ENCODE measurements at regions of chr1 and their contacts with region 1.

Region 1: DNA sequence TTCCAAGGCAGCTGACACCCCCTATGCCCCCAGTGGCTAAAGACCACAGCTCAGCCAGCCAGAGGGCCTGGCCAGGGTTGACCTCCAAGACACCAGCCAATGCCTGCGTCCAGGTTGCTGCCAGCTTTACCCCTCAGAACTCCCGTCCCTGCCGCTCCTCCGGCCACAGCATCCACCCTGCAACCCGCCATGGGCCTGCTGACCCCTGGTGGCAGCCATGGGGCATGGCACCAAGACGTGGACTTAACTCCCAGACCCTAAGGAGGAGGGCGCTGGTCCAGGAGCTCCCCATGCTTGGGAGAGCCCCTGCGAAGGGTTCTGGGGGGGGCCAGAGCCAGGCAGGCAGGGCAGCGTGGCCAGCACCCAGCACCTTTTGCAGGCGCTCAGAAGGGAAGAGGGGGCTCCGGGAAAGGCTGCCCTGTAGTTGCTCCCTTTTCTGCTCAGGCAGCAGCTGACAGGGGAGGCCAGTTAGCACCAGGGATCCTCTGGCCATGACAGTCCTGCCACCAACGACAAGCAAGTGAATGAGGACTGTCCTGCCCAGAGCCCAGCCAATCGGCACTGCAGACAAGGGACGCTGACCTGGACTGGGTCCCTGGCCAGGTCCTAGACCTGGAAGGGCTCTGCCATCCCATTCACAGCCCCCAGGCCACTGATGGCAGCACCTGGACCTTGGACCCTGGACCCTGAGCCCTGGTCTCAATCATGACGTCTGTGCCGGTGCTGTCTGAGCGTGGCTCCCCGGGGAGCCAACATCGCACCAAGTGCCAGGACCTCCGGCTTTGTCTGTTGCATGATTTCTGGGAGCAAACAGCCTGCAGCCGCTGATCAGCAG is 246.2 kb downstream of the NPHP4 start:
- DNase-seq: peak; percentile 62 to 70
- ATAC-seq: peak; percentile 53 to 78 (median 64)
- H3K4me3 ChIP-seq: no peak overlapping the region
- H3K27ac ChIP-seq: no peak overlapping the region
- H3K4me1 ChIP-seq: no peaks in the 10 kb centered on the region
- H3K27me3 ChIP-seq: peaks cover 0 to 36% (median 9%) of the 10 kb centered on the region in 3 donors
- CTCF ChIP-seq: peak; percentile 76

Region 2: DNA sequence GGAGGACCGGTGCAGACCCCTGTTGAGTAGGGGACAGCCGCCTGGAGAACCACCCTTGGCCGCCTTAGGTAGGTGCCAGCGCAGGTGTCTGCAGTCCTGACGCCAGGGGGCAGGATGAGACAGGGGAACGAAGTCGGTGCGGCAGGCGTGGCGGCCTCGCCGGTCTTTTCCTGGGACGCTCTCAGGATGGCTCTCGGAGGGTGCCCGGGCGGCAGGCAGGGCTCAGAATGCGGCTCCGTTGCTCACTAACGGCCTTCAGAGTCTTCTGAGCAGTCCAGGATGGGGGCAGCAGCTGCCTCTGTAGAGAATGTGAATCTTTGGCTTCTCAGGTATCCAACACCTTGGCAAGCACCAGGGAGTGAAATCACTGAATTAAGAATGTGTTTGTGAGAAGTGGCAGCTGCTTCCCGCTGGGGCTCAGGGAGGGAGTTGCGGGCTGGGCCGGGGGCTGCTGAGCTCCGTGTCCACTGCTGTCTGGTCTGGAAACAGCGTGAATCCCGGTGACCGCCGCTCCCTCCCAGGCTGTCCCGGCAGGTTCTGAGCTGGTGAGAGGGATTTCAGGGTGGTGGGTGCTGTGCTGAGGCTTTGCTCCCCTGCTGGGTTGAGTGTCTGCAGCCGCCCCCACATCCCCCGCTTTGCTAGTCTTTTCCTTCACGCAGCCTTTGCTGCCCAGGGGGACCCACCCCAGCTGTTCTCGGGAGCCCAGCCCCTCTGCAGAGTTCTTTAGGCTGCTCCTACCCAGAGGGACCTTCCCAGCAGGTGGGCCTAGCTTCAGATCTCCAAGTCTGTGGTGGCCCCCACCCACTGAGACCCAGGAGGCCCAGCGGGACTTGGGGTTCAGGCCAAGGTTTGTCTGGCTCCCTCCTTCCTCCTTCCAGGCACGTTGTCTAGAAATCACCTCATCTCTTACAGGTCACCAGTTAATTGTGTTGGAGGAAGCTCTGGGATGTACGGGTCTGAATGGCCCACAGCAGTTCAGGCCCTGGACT is 1834.8 kb before region 1 on chr1:
- intact Hi-C with region 1: loop called in 1 of 2 experiments (anchors 10 kb)
- DNase-seq: peak; percentile 49 to 82
- ATAC-seq: peak; percentile 71 to 82 (median 80)
- H3K4me3 ChIP-seq: no peak overlapping the region
- H3K27ac ChIP-seq: no peak overlapping the region
- H3K4me1 ChIP-seq: no peaks in the 10 kb centered on the region
- H3K27me3 ChIP-seq: peaks cover 0 to 15% (median 0%) of the 10 kb centered on the region in 3 donors
- CTCF ChIP-seq: peak; percentile 64

Region 3: DNA sequence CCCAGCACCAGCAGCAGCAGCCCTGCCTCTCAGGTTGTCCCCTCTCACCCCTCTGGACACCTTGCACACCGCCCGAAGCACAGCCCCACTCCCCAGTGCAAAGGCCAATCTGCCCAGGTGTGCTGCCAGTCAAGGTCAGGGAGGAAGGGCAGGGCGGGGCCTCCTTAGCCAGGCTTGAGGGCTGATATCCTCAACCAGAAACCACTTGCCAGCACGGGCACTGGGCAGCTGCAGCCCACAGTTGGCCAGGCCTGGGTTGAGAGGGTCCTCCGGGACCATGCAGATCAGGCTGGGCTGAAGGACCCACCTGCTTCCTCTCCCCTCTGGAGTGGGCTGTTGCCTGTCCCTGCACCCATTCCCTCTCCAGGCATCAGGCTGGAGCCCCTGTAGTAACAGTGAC is 342.1 kb before region 1 on chr1:
- intact Hi-C with region 1: no loop called
- DNase-seq: no peak
- ATAC-seq: no peak
- H3K4me3 ChIP-seq: no peak overlapping the region
- H3K27ac ChIP-seq: no peak overlapping the region
- H3K4me1 ChIP-seq: no peaks in the 10 kb centered on the region
- H3K27me3 ChIP-seq: peaks cover 0 to 1% (median 0%) of the 10 kb centered on the region in 3 donors
- CTCF ChIP-seq: no peak

Measured in psoas muscle (tissue), 8 donors.